H1 (cell line): ENCODE measurements at regions of chr1 and their contacts with region 1.

Region 1: GRCh38 chr1:18234790-18235242 is 127.2 kb downstream of the IGSF21 start:
- DNase-seq: peak; percentile 57 to 86
- H3K4me3 ChIP-seq: no peak overlapping the region
- H3K27ac ChIP-seq: no peak overlapping the region
- H3K4me1 ChIP-seq: peaks cover 6 to 24% (median 14%) of the 10 kb centered on the region in 4 experiments; a peak in 6 of 7 replicates
- H3K27me3 ChIP-seq: no peaks in the 10 kb centered on the region
- CTCF ChIP-seq: peak; percentile 47 to 96 (median 95)
- EP300 ChIP-seq: 0 out of 3 replicates have a peak, but pooled peaks of 1 of the 2 experiments have one; percentile 10
- POLR2A ChIP-seq: no peak
- RAD21 ChIP-seq: peak; percentile 55 to 75

Region 2: DNA sequence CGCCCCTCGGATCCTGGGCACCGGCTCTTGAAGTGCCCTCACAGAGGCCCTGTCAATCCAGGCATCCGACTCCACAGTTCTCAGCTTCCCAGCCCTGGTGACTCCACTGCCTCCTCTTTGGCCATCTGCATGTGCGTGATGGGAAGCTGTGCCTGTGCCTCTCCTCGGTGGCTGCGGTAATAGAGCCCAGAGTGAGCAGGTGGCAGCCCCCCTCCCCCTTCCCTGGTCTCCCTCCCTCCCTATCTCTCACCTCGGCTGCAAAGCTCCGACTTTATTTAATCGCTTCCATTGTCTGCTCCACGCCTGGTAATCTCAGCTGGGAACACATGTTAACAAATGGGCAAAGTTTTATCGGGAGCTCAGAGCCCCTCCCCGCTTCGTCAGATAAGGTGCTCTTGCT is 35.4 kb before region 1 on chr1:
- CTCF ChIA-PET with region 1: interaction called, 12 read pairs
- POLR2A ChIA-PET with region 1: no interaction called
- DNase-seq: peak in 1 of 2 experiments; percentile 55
- H3K4me3 ChIP-seq: no peak overlapping the region
- H3K27ac ChIP-seq: no peak overlapping the region
- H3K4me1 ChIP-seq: peaks cover 4 to 13% (median 8%) of the 10 kb centered on the region in 4 experiments
- H3K27me3 ChIP-seq: no peaks in the 10 kb centered on the region
- CTCF ChIP-seq: no peak
- EP300 ChIP-seq: no peak
- POLR2A ChIP-seq: no peak
- RAD21 ChIP-seq: peak in 1 of 2 experiments; percentile 5; a peak in 1 of 4 replicates

Region 3: GRCh38 chr1:18246543-18246942 is 11.7 kb after region 1 on chr1:
- CTCF ChIA-PET with region 1: interaction called, 111 read pairs
- POLR2A ChIA-PET with region 1: interaction called, 5 read pairs
- DNase-seq: no peak
- H3K4me3 ChIP-seq: no peak overlapping the region
- H3K27ac ChIP-seq: no peak overlapping the region
- H3K4me1 ChIP-seq: peaks cover 0 to 7% (median 0%) of the 10 kb centered on the region in 4 experiments; a peak in 1 of 7 replicates
- H3K27me3 ChIP-seq: no peaks in the 10 kb centered on the region
- CTCF ChIP-seq: peak; percentile 40 to 57 (median 49); a peak in 3 of 4 replicates
- EP300 ChIP-seq: no peak
- POLR2A ChIP-seq: no peak
- RAD21 ChIP-seq: peak in 1 of 2 experiments; percentile 32; a peak in 2 of 4 replicates

Region 4: DNA sequence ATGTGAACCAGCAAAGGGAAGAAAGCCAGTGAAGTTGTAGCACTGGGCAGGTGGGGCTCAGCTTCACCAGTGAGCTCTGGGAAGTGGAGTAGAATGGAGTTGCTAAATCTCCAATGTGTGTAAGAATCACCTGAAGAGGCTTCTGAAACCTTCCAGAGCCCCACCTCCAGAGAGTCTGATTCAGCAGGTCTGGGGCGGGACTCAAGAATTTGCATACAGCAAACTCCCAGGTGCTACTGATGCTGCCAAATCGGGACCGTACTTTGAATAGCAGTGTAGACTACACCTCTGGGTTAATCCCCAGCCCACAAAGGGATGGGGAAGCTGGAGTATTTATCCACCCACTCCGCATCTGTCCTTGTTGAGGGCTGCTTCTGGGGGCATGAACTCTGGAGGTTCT is 27.1 kb after region 1 on chr1:
- CTCF ChIA-PET with region 1: interaction called, 15 read pairs
- POLR2A ChIA-PET with region 1: interaction called, 6 read pairs
- DNase-seq: no peak
- H3K4me3 ChIP-seq: no peak overlapping the region
- H3K27ac ChIP-seq: no peak overlapping the region
- H3K4me1 ChIP-seq: peaks cover 4 to 18% (median 12%) of the 10 kb centered on the region in 4 experiments
- H3K27me3 ChIP-seq: peaks cover 0 to 3% (median 0%) of the 10 kb centered on the region in 4 experiments; a peak in 2 of 7 replicates
- CTCF ChIP-seq: no peak
- EP300 ChIP-seq: no peak
- POLR2A ChIP-seq: no peak
- RAD21 ChIP-seq: no peak

Region 5: GRCh38 chr1:18282851-18283600 is 48.2 kb after region 1 on chr1:
- CTCF ChIA-PET with region 1: interaction called, 12 read pairs
- POLR2A ChIA-PET with region 1: interaction called, 4 read pairs
- DNase-seq: peak in 1 of 2 experiments; percentile 85
- H3K4me3 ChIP-seq: no peak overlapping the region
- H3K27ac ChIP-seq: no peak overlapping the region
- H3K4me1 ChIP-seq: peaks cover 13 to 31% (median 21%) of the 10 kb centered on the region in 4 experiments
- H3K27me3 ChIP-seq: no peaks in the 10 kb centered on the region
- CTCF ChIP-seq: no peak
- EP300 ChIP-seq: peak in 1 of 2 experiments; percentile 34; a peak in 1 of 3 replicates
- POLR2A ChIP-seq: no peak
- RAD21 ChIP-seq: no peak

Region 6: GRCh38 chr1:18299441-18300338 is 64.9 kb after region 1 on chr1:
- CTCF ChIA-PET with region 1: interaction called, 60 read pairs
- POLR2A ChIA-PET with region 1: interaction called, 11 read pairs
- DNase-seq: peak in 1 of 2 experiments; percentile 62
- H3K4me3 ChIP-seq: no peak overlapping the region
- H3K27ac ChIP-seq: peak overlapping the region; percentile 18; the same call in 1 of the 2 replicates
- H3K4me1 ChIP-seq: peaks cover 17 to 36% (median 18%) of the 10 kb centered on the region in 4 experiments
- H3K27me3 ChIP-seq: no peaks in the 10 kb centered on the region
- CTCF ChIP-seq: peak; percentile 75 to 86 (median 84)
- EP300 ChIP-seq: no peak
- POLR2A ChIP-seq: no peak
- RAD21 ChIP-seq: peak; percentile 53 to 71

Region 7: GRCh38 chr1:18333220-18333619 is 98.4 kb after region 1 on chr1:
- CTCF ChIA-PET with region 1: no interaction called
- POLR2A ChIA-PET with region 1: no interaction called
- DNase-seq: no peak
- H3K4me3 ChIP-seq: no peak overlapping the region
- H3K27ac ChIP-seq: no peak overlapping the region
- H3K4me1 ChIP-seq: peaks cover 0 to 6% (median 4%) of the 10 kb centered on the region in 4 experiments; a peak in 4 of 7 replicates
- H3K27me3 ChIP-seq: no peaks in the 10 kb centered on the region
- CTCF ChIP-seq: no peak
- EP300 ChIP-seq: no peak
- POLR2A ChIP-seq: no peak
- RAD21 ChIP-seq: no peak